Sigmoid colon (tissue), 7 donors: ENCODE measurements at regions of chr16 and their contacts with region 1.

Region 1: DNA sequence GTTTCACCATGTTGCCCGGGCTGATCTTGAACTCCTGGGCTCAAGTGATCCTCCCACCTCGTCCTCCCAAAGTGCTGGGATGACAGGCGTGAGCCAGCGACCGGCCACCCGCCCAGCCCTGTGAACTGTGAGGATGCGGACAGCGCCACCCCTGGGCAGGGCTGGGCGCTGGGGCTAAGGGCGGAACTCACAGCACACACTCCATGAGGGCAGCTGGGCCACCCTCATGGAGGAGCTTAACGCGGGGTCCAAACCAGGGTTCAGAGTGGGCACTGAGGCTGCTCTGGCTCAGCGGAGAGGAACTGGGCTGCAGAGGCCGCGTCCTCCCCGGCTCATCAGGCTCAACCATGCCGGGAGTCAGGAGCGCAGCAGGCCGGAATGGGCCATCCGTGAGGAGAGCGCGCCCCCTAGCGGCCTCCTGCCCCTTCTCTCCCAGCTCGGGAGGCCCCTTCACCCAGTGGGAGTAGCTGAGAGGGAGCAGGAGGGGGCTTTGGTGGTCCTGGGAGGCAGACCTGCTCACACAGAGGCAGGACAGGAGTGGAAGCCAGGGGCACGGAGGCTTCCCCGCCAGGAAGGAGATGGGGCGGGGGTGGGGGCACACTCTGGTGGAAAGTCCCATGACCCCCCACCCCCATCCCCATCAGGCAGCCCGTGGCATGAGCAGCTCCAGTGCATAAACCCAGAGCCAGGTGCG is 13.8 kb downstream of the CORO7 start:
- DNase-seq: peak; percentile 92
- H3K4me3 ChIP-seq: peak overlapping the region in 1 of 4 donors; percentile 23
- H3K27ac ChIP-seq: no peak overlapping the region
- H3K4me1 ChIP-seq: peaks cover 0 to 7% (median 6%) of the 10 kb centered on the region in 4 donors
- H3K27me3 ChIP-seq: no peaks in the 10 kb centered on the region
- CTCF ChIP-seq: peak; percentile 93 to 95 (median 94)
- EP300 ChIP-seq: no peak
- POLR2A ChIP-seq: no peak

Region 2: DNA sequence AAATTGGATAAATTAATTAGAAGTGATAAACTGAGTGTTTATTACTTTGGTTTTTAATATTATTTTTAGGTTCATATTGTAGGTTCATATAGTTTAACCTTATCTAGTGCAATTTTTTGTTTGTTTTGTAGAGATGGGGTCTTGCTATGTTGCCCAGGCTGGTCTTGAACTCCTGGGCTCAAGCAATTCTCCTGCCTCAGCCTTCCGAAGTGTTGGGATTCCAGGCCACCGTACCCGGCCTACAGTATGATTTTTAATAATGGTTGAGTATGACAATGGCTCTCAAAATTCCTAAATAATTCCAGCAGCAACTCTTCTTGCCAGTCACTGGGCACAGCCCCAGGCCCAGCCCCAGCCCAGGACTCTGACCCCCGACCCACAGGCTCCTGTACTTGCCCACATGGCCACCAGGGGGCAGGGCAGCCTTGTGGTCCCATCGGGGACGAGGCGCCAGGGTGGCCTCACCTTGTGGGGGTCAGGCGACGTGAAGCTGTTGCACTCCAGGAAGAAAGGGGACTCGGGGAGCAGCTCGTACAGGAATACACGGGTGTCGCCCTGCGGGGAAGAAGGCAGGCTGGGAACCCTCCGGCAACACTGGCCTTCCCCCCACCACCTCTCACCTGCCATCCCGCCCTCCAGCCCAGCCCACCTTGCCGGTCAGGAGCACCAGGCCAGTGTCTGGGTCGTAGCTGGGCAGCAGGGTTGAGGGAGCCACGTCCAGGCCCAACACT is 43.6 kb before region 1 on chr16:
- intact Hi-C with region 1: loop called (anchors 1 kb)
- DNase-seq: peak; percentile 84
- H3K4me3 ChIP-seq: no peak overlapping the region
- H3K27ac ChIP-seq: no peak overlapping the region
- H3K4me1 ChIP-seq: peaks cover 0 to 4% (median 0%) of the 10 kb centered on the region in 4 donors
- H3K27me3 ChIP-seq: no peaks in the 10 kb centered on the region
- CTCF ChIP-seq: peak; percentile 92 to 99 (median 98)
- EP300 ChIP-seq: no peak
- POLR2A ChIP-seq: no peak